ENCODE measurements at regions of chr4 and their contacts with region 1.

Region 1: DNA sequence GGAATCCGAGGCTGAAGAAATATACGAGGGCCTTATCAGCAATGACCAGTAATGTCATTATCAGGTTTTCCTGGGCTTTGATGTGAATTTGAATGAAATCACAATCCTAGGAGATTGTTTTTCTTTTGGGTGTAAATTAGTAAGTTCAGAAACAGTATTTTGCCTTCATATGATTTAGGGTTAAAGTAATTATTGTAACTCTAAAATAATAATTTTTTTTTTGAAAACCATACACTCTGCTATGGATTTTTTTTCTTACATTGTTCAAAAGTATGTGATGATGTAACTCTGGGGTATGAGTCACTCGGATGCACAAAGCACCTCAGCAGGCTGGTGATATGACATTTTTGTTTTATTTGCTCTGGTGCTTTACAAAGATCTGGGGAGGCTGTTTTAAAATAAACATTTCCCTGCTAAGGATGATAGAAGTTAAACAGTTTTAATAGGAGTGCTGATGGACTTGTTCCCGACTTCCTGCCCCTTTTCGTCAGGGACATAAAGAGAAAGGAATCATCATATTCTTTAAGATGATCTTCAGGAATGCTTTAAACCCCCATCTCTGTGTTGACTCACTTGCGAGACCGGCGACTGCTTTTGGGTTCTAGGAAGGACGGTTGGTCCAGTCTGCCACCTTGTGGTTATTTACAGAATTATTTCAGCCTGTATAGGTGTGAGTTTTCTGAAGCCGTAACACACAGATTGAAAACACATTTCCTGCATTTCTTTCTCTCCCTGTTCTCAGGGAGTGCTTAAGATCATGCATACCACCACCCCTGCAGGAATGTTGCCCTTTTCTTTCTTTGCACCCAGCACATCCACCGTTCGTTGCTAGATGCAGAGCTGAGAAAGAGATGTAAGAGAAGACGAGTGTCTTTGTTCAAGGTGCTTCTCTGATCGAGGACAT is 72.5 kb downstream of the RAPGEF2 start:
- DNase-seq: peak; percentile 77
- H3K4me3 ChIP-seq: peak overlapping the region; percentile 27
- H3K27ac ChIP-seq: no peak overlapping the region
- H3K4me1 ChIP-seq: peaks cover 50% of the 10 kb centered on the region
- CTCF ChIP-seq: peak; percentile 88

Region 2: DNA sequence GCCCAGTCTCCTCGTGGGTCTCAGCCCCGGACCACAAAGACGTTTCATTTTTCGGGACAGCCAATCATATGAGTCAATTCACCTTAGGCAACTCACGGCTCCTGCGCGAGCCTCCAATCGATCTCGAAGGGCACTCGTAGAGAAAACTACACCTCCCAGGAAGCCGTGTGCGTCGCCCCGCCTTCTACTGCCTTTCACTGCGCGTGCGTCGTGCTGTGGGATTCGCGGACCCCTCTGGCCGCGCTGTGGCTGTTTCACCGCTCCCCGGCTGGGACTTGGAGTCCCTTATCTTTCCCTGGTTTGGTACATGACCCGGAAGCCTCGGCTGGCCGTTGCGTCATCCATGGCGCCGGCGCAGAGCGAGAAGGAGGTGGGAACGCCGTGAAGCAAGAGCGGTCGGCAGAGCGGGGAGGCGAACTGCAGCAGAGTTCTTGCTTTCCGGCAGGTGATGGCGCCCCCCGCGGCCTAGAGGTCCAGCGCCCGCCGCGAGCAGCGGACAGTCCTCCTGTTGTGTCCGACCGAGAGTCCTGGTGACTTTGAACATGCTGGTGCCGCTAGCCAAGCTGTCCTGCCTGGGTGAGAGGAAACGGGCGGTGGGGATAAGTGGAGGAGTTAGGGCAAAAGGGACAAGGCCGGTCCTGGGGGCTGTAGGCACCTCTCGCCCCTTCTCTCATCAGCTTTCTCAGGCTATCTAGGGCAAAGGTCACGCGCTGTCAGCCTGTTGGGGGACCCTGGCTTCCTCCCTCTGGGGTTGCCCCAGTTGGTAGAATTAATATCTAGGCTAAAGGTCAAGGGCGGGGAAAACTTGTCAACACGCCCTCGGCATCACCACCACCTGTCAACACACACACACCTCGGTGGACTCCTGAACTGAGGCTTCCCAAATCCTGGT is 503.2 kb before region 1 on chr4 and contains the start of gene ETFDH:
- CTCF ChIA-PET with region 1: no interaction called
- POLR2A ChIA-PET with region 1: no interaction called
- intact Hi-C with region 1: loop called (anchors 5 kb)
- DNase-seq: peak; percentile 98
- H3K4me3 ChIP-seq: peak within 1 kb of the TSS; percentile 81
- H3K27ac ChIP-seq: peak within 1 kb of the TSS; percentile 78
- H3K4me1 ChIP-seq: peaks cover 7% of the 10 kb centered on the region
- CTCF ChIP-seq: peak; percentile 82
- total RNA-seq, gene ETFDH: 13.3 and 17.6 TPM in 2 replicates

Region 3: DNA sequence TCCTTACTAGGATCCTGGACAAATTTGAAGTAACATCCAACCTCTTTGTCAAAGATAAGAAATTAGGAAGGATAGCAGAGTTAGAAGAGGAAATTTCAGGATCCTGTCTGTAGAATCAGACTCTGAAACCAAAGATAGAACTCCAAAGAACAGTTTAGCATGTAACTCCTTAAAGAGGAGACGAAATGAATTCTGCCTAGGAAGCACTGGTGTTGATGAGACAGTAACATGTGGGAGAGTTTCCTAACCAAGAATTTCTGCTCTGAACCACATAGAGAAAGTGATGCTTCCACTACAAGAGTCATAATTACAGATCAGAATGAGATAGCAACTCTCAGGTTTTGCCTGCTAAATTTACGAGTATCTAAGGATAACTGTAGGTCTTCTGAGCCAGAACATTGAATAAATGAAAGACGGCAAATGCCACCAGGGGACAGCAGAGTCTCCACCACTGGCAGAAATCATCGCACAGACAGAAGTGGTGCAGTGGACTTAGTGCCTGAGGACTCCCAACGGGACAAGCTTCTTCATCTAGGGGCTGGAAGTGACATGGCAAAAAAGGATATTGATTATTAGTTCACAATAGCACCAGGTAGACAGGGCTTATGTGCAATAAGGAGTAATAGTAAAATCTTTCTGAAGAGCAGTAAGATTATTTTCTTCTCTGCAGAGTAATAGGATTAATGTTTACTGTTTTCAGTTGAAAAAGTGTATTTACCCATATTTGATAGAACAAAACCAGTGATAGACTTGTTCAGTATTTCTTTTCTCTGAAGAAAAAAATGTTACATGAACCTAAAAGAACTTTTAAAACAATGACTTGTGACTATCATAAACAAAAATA is 445.4 kb before region 1 on chr4:
- CTCF ChIA-PET with region 1: no interaction called
- POLR2A ChIA-PET with region 1: no interaction called
- intact Hi-C with region 1: loop called (anchors 1 kb)
- DNase-seq: peak; percentile 39
- H3K4me3 ChIP-seq: no peak overlapping the region
- H3K27ac ChIP-seq: no peak overlapping the region
- H3K4me1 ChIP-seq: no peaks in the 10 kb centered on the region
- CTCF ChIP-seq: peak; percentile 75

Region 4: GRCh38 chr4:158856852-158857251 is 318.5 kb before region 1 on chr4:
- CTCF ChIA-PET with region 1: no interaction called
- POLR2A ChIA-PET with region 1: no interaction called
- intact Hi-C with region 1: loop called (anchors 1 kb)
- DNase-seq: peak; percentile 48
- H3K4me3 ChIP-seq: no peak overlapping the region
- H3K27ac ChIP-seq: no peak overlapping the region
- H3K4me1 ChIP-seq: no peaks in the 10 kb centered on the region
- CTCF ChIP-seq: peak; percentile 85

Region 5: DNA sequence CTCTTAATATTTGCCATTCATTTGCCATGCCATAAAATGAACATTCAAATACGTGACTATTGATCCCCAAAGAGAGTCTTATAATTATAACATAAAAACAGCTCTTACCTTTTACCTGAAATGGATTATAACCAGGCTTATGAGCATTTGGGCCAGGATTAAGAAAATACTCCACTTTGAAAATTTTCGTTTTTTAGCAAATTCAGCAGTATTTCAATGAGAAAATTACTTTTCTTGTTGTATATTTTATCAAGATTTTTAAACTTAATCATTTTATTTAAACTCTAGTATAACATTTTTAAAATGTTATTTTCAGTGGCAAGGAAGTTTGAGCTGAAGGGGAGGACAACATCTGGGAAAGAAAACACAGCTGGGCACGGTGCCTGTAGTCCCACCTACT is 131.5 kb before region 1 on chr4:
- CTCF ChIA-PET with region 1: no interaction called
- POLR2A ChIA-PET with region 1: no interaction called
- intact Hi-C with region 1: no loop called
- DNase-seq: no peak
- H3K4me3 ChIP-seq: no peak overlapping the region
- H3K27ac ChIP-seq: no peak overlapping the region
- H3K4me1 ChIP-seq: no peaks in the 10 kb centered on the region
- CTCF ChIP-seq: no peak

Region 6: GRCh38 chr4:159102622-159103383 is 72.5 kb before region 1 on chr4 and contains the start of gene RAPGEF2:
- CTCF ChIA-PET with region 1: interaction called, 3 read pairs
- POLR2A ChIA-PET with region 1: no interaction called
- intact Hi-C with region 1: loop called (anchors 5 kb)
- DNase-seq: peak; percentile 88
- H3K4me3 ChIP-seq: peak within 1 kb of the TSS; percentile 83
- H3K27ac ChIP-seq: no peak within 1 kb of the TSS
- H3K4me1 ChIP-seq: peaks cover 21% of the 10 kb centered on the region
- CTCF ChIP-seq: no peak
- total RNA-seq, gene RAPGEF2: 4.6 and 4.7 TPM in 2 replicates

Region 7: DNA sequence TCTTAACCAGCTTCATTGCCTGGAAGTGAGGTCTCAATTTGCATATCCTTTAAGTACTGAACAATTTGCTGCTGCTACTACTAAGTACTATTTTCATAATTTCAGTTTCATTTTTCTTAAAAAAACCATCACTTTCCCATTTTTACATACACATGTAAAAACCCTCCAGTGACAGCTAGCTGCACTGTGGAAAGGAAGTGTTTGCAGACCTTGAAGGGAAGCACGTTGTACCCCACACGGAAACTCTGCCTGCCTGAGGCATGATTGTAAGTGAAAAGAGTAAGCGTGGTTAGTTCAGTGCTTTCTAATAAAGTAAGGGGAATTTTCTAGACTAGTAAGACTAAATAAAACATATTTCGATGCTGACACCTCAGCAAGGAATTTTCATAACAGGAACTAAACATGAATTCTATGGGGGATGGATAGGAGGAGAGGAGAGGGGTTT is 31.1 kb after region 1 on chr4:
- CTCF ChIA-PET with region 1: no interaction called
- POLR2A ChIA-PET with region 1: no interaction called
- intact Hi-C with region 1: loop called (anchors 2 kb)
- DNase-seq: no peak
- H3K4me3 ChIP-seq: no peak overlapping the region
- H3K27ac ChIP-seq: no peak overlapping the region
- H3K4me1 ChIP-seq: peaks cover 6% of the 10 kb centered on the region
- CTCF ChIP-seq: no peak

Measured in OCI-LY7 (cell line).